H1 (cell line): ENCODE measurements at regions of chr17 and their contacts with region 1.

Region 1: DNA sequence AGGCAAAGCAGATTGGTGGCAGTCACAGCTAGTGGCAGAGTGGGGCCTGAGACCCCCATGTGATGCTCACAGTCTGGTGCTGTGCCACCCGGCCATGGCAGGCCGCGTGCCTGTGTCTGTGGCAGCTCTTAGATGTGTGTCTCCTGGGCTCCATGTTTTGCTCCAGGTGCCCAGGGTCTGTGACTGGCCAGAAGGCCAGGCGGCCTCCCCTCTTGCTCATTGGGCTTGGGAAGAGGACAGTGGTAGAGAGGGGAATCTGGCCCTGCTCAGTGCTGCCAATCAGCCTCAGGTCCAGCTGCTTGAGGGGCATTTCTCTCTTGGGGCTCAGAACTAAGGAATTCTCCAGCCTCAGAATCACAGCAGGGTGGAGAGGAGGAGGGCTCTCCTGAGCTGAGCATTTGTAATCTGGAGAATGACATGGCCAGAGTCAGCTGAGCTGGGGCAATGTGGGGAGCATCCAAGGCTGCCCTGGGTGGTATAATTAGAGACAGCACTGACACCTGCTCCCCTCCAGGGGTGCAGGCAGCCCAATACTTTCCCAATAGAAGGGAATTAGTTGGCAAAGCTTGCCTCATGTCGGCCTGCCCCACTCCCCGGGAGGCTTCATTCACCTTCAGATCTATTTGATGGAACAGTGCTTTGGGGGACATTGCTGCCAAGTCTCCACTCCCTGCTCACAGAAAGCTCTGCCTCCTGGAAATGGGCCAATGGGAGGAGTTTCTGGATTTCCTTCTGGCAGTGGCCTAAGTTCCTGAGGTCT is 2.7 kb upstream of the LASP1NB start:
- DNase-seq: peak in 1 of 2 experiments; percentile 63
- H3K4me3 ChIP-seq: no peak overlapping the region
- H3K27ac ChIP-seq: peak overlapping the region; percentile 53; the same call in 1 of the 2 replicates
- H3K4me1 ChIP-seq: peaks cover 0 to 13% (median 9%) of the 10 kb centered on the region in 4 experiments; a peak in 6 of 7 replicates
- H3K27me3 ChIP-seq: no peaks in the 10 kb centered on the region
- CTCF ChIP-seq: peak in 2 of 3 experiments; percentile 4 to 21; a peak in 2 of 4 replicates
- EP300 ChIP-seq: no peak
- POLR2A ChIP-seq: no peak
- RAD21 ChIP-seq: peak in 1 of 2 experiments; percentile 1; a peak in 2 of 4 replicates

Region 2: DNA sequence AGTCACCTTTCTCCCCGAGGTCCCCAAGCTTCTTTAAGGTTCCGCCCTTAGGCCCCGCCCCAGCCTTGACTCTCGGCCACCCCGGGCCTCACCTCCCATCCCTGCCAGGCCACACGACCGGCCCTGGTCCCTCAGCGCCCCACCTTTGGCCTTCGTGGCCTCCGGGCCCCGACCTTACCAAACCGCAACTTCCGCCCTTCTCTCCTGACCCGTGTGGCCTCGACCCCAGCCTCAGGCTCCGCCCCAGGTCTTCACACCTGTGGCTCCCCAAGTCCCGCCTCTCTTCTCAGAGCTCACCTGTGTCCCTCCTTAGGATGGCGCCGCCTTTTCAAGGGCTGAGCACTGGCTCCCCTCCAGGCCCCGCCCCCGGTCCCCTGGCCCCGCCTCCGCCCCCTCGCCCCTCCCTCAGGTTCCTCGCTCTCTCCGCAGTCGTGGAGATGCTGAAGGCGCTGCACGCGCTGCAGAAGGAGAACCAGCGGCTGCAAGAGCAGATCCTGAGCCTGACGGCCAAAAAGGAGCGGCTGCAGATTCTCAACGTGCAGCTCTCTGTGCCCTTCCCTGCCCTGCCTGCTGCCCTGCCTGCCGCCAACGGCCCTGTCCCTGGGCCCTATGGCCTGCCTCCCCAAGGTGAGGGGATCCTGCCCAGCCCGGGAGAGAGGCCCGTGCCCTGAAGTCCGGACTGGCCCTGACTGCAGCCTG is 202.6 kb before region 1 on chr17:
- CTCF ChIA-PET with region 1: no interaction called
- POLR2A ChIA-PET with region 1: no interaction called
- DNase-seq: peak; percentile 50 to 81
- H3K4me3 ChIP-seq: peak overlapping the region in 3 of 4 experiments; percentile 2 to 40 (median 17); a peak in 5 of 8 replicates
- H3K27ac ChIP-seq: no peak overlapping the region
- H3K4me1 ChIP-seq: peaks cover 11 to 29% (median 16%) of the 10 kb centered on the region in 4 experiments
- H3K27me3 ChIP-seq: peaks cover 0 to 10% (median 7%) of the 10 kb centered on the region in 4 experiments; a peak in 6 of 7 replicates
- CTCF ChIP-seq: no peak
- EP300 ChIP-seq: no peak
- POLR2A ChIP-seq: no peak
- RAD21 ChIP-seq: no peak

Region 3: GRCh38 chr17:38735161-38735997 is 187.3 kb before region 1 on chr17:
- CTCF ChIA-PET with region 1: no interaction called
- POLR2A ChIA-PET with region 1: no interaction called
- DNase-seq: peak in 1 of 2 experiments; percentile 93
- H3K4me3 ChIP-seq: no peak overlapping the region
- H3K27ac ChIP-seq: no peak overlapping the region
- H3K4me1 ChIP-seq: peaks cover 0 to 12% (median 6%) of the 10 kb centered on the region in 4 experiments; a peak in 5 of 7 replicates
- H3K27me3 ChIP-seq: no peaks in the 10 kb centered on the region
- CTCF ChIP-seq: peak; percentile 85 to 99 (median 93)
- EP300 ChIP-seq: no peak
- POLR2A ChIP-seq: no peak
- RAD21 ChIP-seq: peak; percentile 87 to 89

Region 4: GRCh38 chr17:38868817-38869525 is 53.7 kb before region 1 on chr17:
- CTCF ChIA-PET with region 1: interaction called, 9 read pairs
- POLR2A ChIA-PET with region 1: interaction called, 98 read pairs
- DNase-seq: peak; percentile 54 to 99
- H3K4me3 ChIP-seq: peak overlapping the region; percentile 88 to 100 (median 98)
- H3K27ac ChIP-seq: peak overlapping the region; percentile 81
- H3K4me1 ChIP-seq: peaks cover 0 to 24% (median 13%) of the 10 kb centered on the region in 4 experiments; a peak in 6 of 7 replicates
- H3K27me3 ChIP-seq: no peaks in the 10 kb centered on the region
- CTCF ChIP-seq: peak; percentile 38 to 52 (median 41)
- EP300 ChIP-seq: no peak
- POLR2A ChIP-seq: peak in 1 of 2 experiments; percentile 27; a peak in 2 of 3 replicates
- RAD21 ChIP-seq: no peak; a peak in 1 of 4 replicates

Region 5: DNA sequence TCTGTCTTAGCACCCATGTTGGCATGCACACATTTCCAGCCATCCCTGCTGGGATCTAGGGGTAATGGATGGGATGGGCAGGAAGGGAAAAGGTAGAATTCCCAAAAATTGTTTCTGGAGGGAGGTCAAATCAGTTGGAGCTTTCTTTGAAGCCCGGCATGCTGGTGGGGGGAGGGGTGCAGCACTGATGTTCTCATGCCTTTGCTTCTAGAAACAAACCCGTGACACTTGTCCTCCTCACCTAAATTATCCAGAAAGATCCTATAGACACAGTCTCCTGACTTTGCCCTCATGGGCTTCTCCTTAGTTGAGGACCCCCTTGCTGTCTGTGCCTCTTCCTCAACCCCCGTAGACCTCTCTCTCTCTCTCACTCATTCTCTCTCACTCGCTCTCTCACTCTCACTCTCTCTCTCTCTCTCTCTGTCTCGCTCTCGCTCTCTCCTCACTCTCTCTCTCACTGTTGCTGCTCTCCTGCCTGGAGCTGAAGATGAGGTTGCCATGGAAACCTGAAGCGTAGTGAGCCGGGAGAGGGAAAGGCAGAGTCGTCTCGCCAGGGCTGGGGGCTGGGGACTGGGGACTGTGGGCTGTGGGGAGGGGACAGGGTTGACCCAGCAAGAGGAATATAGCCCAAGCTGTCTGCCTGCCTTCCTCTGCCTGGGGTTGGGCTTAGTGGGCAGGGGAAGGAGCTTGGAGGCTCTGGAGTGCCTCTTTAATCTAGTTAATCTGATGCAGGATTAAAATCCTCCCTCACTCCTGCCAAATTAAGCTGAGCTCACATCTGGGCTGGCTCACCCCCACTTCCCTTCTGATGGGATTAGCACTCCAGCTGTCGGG is 36.8 kb before region 1 on chr17:
- CTCF ChIA-PET with region 1: interaction called, 26 read pairs
- POLR2A ChIA-PET with region 1: interaction called, 5 read pairs
- DNase-seq: no peak
- H3K4me3 ChIP-seq: peak overlapping the region in 1 of 4 experiments; percentile 0; a peak in 1 of 8 replicates
- H3K27ac ChIP-seq: no peak overlapping the region
- H3K4me1 ChIP-seq: peaks cover 14 to 32% (median 25%) of the 10 kb centered on the region in 4 experiments
- H3K27me3 ChIP-seq: no peaks in the 10 kb centered on the region
- CTCF ChIP-seq: no peak
- EP300 ChIP-seq: no peak
- POLR2A ChIP-seq: no peak
- RAD21 ChIP-seq: no peak

Region 6: GRCh38 chr17:38942696-38943334 is 20.1 kb after region 1 on chr17:
- CTCF ChIA-PET with region 1: interaction called, 22 read pairs
- POLR2A ChIA-PET with region 1: interaction called, 10 read pairs
- DNase-seq: no peak
- H3K4me3 ChIP-seq: no peak overlapping the region
- H3K27ac ChIP-seq: no peak overlapping the region
- H3K4me1 ChIP-seq: no peaks in the 10 kb centered on the region
- H3K27me3 ChIP-seq: no peaks in the 10 kb centered on the region
- CTCF ChIP-seq: no peak
- EP300 ChIP-seq: no peak
- POLR2A ChIP-seq: no peak
- RAD21 ChIP-seq: no peak

Region 7: GRCh38 chr17:39174907-39175694 is 252.4 kb after region 1 on chr17:
- CTCF ChIA-PET with region 1: interaction called, 21 read pairs
- POLR2A ChIA-PET with region 1: interaction called, 5 read pairs
- DNase-seq: peak; percentile 82 to 92
- H3K4me3 ChIP-seq: peak overlapping the region in 1 of 4 experiments; percentile 22; a peak in 1 of 8 replicates
- H3K27ac ChIP-seq: no peak overlapping the region
- H3K4me1 ChIP-seq: peaks cover 0 to 14% (median 10%) of the 10 kb centered on the region in 4 experiments; a peak in 6 of 7 replicates
- H3K27me3 ChIP-seq: no peaks in the 10 kb centered on the region
- CTCF ChIP-seq: peak; percentile 87 to 92 (median 91)
- EP300 ChIP-seq: no peak
- POLR2A ChIP-seq: peak in 1 of 2 experiments; percentile 60; a peak in 1 of 3 replicates
- RAD21 ChIP-seq: peak; percentile 71 to 83